ENCODE measurements at regions of chr10 and their contacts with region 1.

Region 1: GRCh38 chr10:91632671-91633550 is at the start of gene PPP1R3C:
- DNase-seq: peak; percentile 86 to 97 (median 93)
- ATAC-seq: peak; percentile 96
- H3K4me3 ChIP-seq: peak within 1 kb of the TSS; percentile 43
- H3K27ac ChIP-seq: peak within 1 kb of the TSS; percentile 50 to 71
- H3K4me1 ChIP-seq: peaks cover 5 to 10% of the 10 kb centered on the region in 2 donors
- H3K27me3 ChIP-seq: peaks cover 0 to 42% of the 10 kb centered on the region in 2 donors
- CTCF ChIP-seq: no peak
- polyA plus RNA-seq, gene PPP1R3C: 178 to 237 (median 205) TPM

Region 2: GRCh38 chr10:91493313-91493712 is 139.6 kb before region 1 on chr10:
- intact Hi-C with region 1: loop called in 1 of 2 experiments (anchors 10 kb)
- DNase-seq: peak in 2 of 4 donors; percentile 12 to 15
- ATAC-seq: peak; percentile 51
- H3K4me3 ChIP-seq: no peak overlapping the region
- H3K27ac ChIP-seq: no peak overlapping the region
- H3K4me1 ChIP-seq: no peaks in the 10 kb centered on the region
- H3K27me3 ChIP-seq: no peaks in the 10 kb centered on the region
- CTCF ChIP-seq: peak; percentile 29 to 43

Region 3: DNA sequence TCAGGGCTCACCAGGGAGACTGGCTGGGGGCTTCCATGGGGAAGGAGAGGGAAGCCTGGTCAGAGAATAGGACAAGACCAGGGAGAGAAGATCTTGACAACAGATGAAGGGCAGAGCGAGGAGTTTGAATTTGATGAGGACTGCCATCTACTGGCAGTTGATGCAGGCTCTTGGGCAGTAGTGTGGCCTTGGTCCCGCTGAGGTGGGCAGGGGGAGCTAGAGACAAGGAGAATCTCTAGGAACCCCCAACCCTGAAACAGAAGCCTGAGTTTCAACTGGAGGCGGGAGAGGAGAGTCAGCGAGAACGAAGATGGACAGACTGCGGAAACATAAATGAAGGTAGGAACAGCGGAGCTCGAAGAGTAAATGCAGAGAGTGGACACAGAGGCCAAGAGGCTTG is 81.1 kb before region 1 on chr10:
- intact Hi-C with region 1: loop called in 1 of 2 experiments (anchors 5 kb)
- DNase-seq: peak in 3 of 4 donors; percentile 50 to 92 (median 83)
- ATAC-seq: peak; percentile 79
- H3K4me3 ChIP-seq: no peak overlapping the region
- H3K27ac ChIP-seq: no peak overlapping the region
- H3K4me1 ChIP-seq: no peaks in the 10 kb centered on the region
- H3K27me3 ChIP-seq: no peaks in the 10 kb centered on the region
- CTCF ChIP-seq: peak; percentile 20 to 38

Region 4: DNA sequence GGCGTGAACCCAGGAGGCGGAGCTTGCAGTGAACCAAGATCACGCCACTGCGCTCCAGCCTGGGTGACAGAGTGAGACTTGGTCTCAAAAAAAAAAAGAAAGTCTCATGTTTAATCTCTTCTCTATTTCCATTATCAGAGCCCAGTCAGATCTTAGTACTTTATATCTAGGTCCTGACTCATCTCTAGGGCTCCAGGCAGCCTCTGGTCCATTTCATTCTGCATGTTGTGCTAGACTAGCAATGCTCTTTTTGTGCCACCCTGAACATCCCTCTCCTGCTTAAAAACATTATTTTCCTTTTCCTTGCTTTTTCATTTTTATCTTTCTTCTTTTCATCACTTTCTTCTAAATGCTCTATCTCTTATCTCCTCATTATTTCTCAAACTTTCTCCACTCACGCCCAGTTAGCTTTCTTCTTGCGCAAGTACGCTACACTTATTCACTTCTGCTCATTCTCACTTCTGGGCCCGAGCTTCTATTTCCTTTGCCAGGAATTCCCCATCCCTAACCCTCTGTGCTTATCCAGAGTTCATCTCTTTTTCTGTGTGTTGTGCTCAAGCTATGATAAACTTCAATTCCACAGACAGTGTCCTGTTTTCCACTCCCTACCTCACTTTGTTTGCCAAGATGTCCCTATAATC is 354.6 kb after region 1 on chr10:
- intact Hi-C with region 1: no loop called
- DNase-seq: no peak
- ATAC-seq: peak; percentile 56
- H3K4me3 ChIP-seq: no peak overlapping the region
- H3K27ac ChIP-seq: no peak overlapping the region
- H3K4me1 ChIP-seq: no peaks in the 10 kb centered on the region
- H3K27me3 ChIP-seq: no peaks in the 10 kb centered on the region
- CTCF ChIP-seq: no peak

Measured in left lung (tissue), 14 donors.